HAP-1 (cell line): ENCODE measurements at regions of chr12 and their contacts with region 1.

Region 1: GRCh38 chr12:110100315-110100970 is 23.7 kb upstream of the IFT81 start:
- DNase-seq: peak; percentile 83 to 84
- H3K4me3 ChIP-seq: no peak overlapping the region
- H3K4me1 ChIP-seq: no peaks in the 10 kb centered on the region; the same call in 1 of the 2 replicates
- H3K27me3 ChIP-seq: no peaks in the 10 kb centered on the region

Region 2: DNA sequence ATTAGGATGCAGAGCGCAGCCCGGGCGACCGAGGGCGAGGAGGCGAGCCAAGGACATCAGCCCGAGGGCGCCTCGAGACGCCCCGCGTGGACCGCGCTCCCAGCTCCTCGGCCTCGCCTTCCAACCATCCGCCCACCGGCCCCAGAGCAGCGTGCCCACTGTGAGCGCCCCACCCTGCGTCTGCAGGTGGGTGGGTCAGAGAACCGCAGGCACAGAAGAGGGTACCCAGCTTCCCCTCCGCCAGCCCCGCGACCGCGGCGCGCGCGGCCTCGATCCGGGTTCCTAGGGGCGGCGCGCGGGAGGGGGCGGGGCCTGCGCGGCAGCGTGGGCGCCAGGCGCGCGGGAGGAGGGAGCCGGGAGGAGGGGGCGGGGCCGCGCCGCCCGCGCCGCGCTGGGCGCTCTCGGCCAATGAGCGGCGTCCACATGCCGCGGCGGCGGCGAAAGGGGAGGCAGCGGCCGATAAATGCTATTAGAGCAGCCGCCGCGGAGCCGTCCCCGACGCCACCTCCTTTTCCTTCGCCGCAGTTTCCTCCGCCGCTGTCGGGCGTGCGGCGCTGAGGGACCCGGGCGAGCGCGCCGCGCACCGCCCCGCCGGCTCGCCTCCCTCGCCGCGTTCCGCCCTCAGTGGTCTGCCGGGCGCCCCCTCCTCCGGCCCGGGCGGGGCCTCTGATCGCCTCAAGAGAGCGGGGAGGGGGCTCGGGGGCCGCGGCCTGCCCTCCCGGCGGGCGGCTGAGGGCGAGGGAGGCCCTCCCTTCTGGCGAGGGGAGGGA is 180.5 kb after region 1 on chr12 and contains the start of gene ATP2A2:
- in situ Hi-C with region 1: loop called (anchors 25 kb)
- DNase-seq: peak; percentile 88 to 91
- H3K4me3 ChIP-seq: peak within 1 kb of the TSS; percentile 68
- H3K4me1 ChIP-seq: peaks cover 33% of the 10 kb centered on the region
- H3K27me3 ChIP-seq: no peaks in the 10 kb centered on the region

Region 3: GRCh38 chr12:110426406-110426805 is 326.0 kb after region 1 on chr12:
- in situ Hi-C with region 1: loop called (anchors 10 kb)
- DNase-seq: no peak
- H3K4me3 ChIP-seq: no peak overlapping the region
- H3K4me1 ChIP-seq: no peaks in the 10 kb centered on the region; the same call in 1 of the 2 replicates
- H3K27me3 ChIP-seq: no peaks in the 10 kb centered on the region